A549 (cell line): ENCODE measurements at regions of chr21 and their contacts with region 1.

Region 1: GRCh38 chr21:38658511-38658910 is 147.2 kb upstream of the ETS2 start:
- DNase-seq: no peak
- ATAC-seq: no peak
- H3K4me3 ChIP-seq: no peak overlapping the region
- H3K27ac ChIP-seq: no peak overlapping the region
- H3K4me1 ChIP-seq: peaks cover 3% of the 10 kb centered on the region; the same call in 1 of the 3 replicates
- CTCF ChIP-seq: no peak
- EP300 ChIP-seq: no peak
- POLR2A ChIP-seq: no peak
- RAD21 ChIP-seq: no peak

Region 2: DNA sequence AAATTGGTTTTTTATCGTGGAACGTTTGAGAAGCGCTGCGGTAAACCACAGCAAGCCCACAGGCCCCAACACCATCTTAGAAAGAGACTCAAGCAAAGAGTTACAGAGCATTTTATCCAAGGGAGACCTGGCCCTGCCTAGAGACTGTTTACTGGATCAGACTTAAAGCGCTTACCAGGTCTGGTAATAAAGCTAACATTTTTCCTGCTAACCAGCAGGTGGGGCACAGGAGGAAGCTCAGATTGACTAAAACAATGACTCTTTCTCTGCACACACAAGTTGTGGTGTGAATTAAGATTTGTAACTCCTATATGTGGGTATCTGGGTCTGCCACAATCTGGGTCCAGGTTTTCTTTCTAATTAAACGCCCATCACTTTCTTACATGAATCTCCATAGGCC is 10.7 kb after region 1 on chr21:
- CTCF ChIA-PET with region 1: interaction called, 14 read pairs
- POLR2A ChIA-PET with region 1: no interaction called
- DNase-seq: peak; percentile 10 to 47
- ATAC-seq: peak; percentile 56 to 73; a peak in 3 of 6 replicates
- H3K4me3 ChIP-seq: no peak overlapping the region
- H3K27ac ChIP-seq: no peak overlapping the region
- H3K4me1 ChIP-seq: no peaks in the 10 kb centered on the region
- CTCF ChIP-seq: peak; percentile 37; the same call in 2 of the 3 replicates
- EP300 ChIP-seq: no peak
- POLR2A ChIP-seq: no peak
- RAD21 ChIP-seq: peak; percentile 28 to 30; a peak in 3 of 5 replicates